Activated CD4-positive, alpha-beta T cell treated with anti-CD3 and anti-CD28 coated beads, Interleukin-2, amount 10 ng/mL, durations not matched to agents 7 days and 5 days (primary cell): ENCODE measurements at regions of chr1 and their contacts with region 1.

Region 1: GRCh38 chr1:23118957-23119792 is 49.5 kb downstream of the LUZP1 start:
- DNase-seq: peak; percentile 69
- H3K4me3 Mint-ChIP-seq: peak overlapping the region; percentile 6
- H3K27ac Mint-ChIP-seq: peak overlapping the region; percentile 89
- H3K4me1 Mint-ChIP-seq: peaks cover 58% of the 10 kb centered on the region
- H3K27me3 Mint-ChIP-seq: no peaks in the 10 kb centered on the region

Region 2: GRCh38 chr1:23108918-23109533 is 10.1 kb before region 1 on chr1:
- CTCF ChIA-PET with region 1: interaction called, 13 read pairs
- POLR2A ChIA-PET with region 1: no interaction called
- DNase-seq: no peak
- H3K4me3 Mint-ChIP-seq: no peak overlapping the region
- H3K27ac Mint-ChIP-seq: no peak overlapping the region
- H3K4me1 Mint-ChIP-seq: peaks cover 43% of the 10 kb centered on the region
- H3K27me3 Mint-ChIP-seq: no peaks in the 10 kb centered on the region